Activated CD4-positive, alpha-beta T cell treated with anti-CD3 and anti-CD28 coated beads for 36 hours (primary cell): ENCODE measurements at regions of chr16 and their contacts with region 1.

Region 1: GRCh38 chr16:89422905-89423630 is 67.3 kb downstream of the ANKRD11 start:
- DNase-seq: peak; percentile 80
- ATAC-seq: peak; percentile 80
- H3K4me3 Mint-ChIP-seq: peak overlapping the region; percentile 15
- H3K27ac Mint-ChIP-seq: peak overlapping the region; percentile 74
- H3K4me1 Mint-ChIP-seq: peaks cover 84% of the 10 kb centered on the region
- H3K27me3 Mint-ChIP-seq: no peaks in the 10 kb centered on the region

Region 2: DNA sequence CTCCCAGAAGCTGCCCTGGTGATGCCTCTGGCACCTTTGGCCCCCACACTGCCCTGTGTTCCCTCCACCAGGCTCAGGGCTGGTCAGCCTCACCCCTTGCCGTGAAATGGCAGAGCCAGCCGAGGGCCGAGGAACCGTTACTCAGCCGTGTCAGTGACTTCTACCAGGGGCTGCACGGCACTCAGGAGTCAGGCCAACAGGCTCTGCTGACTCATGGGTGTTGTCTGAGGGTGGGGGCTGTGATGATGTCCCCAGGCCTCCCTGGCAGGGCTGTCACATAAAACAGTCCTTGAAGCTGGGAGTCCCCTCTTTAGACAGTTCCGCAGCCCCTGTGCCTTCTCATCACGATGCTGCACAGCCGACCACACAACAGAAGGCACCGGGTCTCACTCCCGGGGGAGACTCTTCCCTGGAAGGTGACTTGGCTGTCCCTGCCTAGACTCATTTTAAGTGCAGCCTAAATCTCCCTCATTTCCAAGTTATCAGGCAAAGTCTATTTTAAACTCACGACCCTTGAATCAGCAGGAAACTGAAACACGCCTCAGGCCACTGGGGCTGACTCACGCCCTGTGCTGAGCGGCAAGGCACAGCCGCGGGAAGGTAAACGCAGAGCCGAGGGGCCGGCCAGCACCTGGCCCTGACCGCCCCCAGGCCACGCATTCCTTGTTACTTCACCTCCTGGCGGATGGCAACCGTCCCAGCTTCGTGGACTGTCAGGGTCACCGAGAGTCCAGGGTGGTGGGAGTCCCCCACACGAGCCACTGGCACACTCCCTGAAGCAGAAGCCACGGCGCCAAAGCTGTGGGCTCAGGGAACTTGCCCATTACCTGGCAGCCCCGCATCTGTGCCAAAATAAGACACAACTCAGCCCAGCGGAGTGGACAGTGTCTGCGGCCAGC is 102.9 kb before region 1 on chr16:
- CTCF ChIA-PET with region 1: no interaction called
- POLR2A ChIA-PET with region 1: interaction called, 4 read pairs
- intact Hi-C with region 1: loop called in 1 of 2 experiments (anchors 5 kb)
- DNase-seq: peak; percentile 75
- ATAC-seq: peak; percentile 34
- H3K4me3 Mint-ChIP-seq: no peak overlapping the region
- H3K27ac Mint-ChIP-seq: peak overlapping the region; percentile 75
- H3K4me1 Mint-ChIP-seq: peaks cover 95% of the 10 kb centered on the region
- H3K27me3 Mint-ChIP-seq: no peaks in the 10 kb centered on the region

Region 3: GRCh38 chr16:89436366-89436765 is 13.3 kb after region 1 on chr16:
- CTCF ChIA-PET with region 1: interaction called, 4 read pairs
- POLR2A ChIA-PET with region 1: interaction called, 4 read pairs
- intact Hi-C with region 1: loop called (anchors 2 kb)
- DNase-seq: no peak
- ATAC-seq: no peak
- H3K4me3 Mint-ChIP-seq: no peak overlapping the region
- H3K27ac Mint-ChIP-seq: no peak overlapping the region
- H3K4me1 Mint-ChIP-seq: peaks cover 74% of the 10 kb centered on the region
- H3K27me3 Mint-ChIP-seq: no peaks in the 10 kb centered on the region